ENCODE measurements at regions of chr1 and their contacts with region 1.

Region 1: GRCh38 chr1:209805875-209806760 is at the start of gene IRF6:
- DNase-seq: peak; percentile 98
- ATAC-seq: peak; percentile 93
- H3K4me3 Mint-ChIP-seq: peak within 1 kb of the TSS; percentile 98
- H3K27ac Mint-ChIP-seq: peak within 1 kb of the TSS; percentile 99
- H3K4me1 Mint-ChIP-seq: peaks cover 17% of the 10 kb centered on the region
- H3K27me3 Mint-ChIP-seq: no peaks in the 10 kb centered on the region; the same call in none of the 2 replicates
- CTCF ChIP-seq: no peak
- total RNA-seq, gene IRF6: 16.6 to 17.9 TPM (median 17.2 TPM) in 3 replicates

Region 2: DNA sequence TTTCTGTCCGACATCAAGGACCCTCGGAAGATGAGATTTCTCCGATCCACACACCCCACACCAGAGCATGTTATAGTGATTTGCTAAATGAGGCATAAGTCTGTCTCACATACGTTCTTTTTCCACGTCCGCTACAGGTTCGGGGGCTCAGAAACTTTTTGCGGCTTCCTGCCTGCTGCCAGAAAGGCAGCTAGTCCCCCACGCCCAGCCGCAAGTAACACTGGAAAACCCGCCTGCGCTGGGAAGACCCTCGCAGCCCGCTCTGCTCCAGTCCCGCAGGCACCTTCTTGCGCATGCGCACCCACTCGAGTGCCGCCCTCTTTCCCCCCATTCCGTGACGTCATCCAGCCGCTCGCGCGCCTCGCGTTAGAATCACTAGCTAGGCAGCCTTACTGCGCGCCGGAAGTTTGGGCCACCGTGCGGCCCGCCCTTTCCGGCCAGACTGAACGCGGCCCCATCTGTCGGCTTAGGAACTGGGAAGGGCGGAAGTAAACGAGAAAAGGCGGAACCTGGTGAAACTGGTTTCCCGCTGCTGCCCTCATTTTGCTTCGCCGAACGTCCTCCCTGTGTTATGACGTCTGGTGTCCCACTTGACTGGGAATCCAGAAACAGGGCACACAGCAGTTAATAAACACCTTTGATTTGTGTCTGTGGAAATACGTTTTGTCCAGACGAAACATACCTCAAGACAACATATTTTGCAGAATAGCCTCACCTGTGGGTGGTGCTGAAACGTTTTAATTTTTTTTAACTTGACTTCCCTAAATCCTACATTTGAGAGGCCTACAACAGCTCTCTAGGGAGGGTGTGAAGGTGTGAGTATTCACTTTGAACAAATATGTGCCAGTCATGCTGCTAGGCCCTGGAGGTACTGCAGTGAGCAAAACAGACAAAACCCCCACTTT is 21.6 kb before region 1 on chr1 and contains the start of gene C1orf74:
- CTCF ChIA-PET with region 1: interaction called, 6 read pairs
- POLR2A ChIA-PET with region 1: interaction called, 10 read pairs
- DNase-seq: peak; percentile 100
- ATAC-seq: peak; percentile 99
- H3K4me3 Mint-ChIP-seq: peak within 1 kb of the TSS; percentile 96
- H3K27ac Mint-ChIP-seq: peak within 1 kb of the TSS; percentile 93
- H3K4me1 Mint-ChIP-seq: peaks cover 15% of the 10 kb centered on the region; the same call in 1 of the 2 replicates
- H3K27me3 Mint-ChIP-seq: peaks cover 6% of the 10 kb centered on the region
- CTCF ChIP-seq: no peak
- total RNA-seq, gene C1orf74: 4.1 to 4.6 TPM (median 4.4 TPM) in 3 replicates

Region 3: GRCh38 chr1:209827384-209828262 is 21.5 kb after region 1 on chr1 and contains the start of gene UTP25:
- CTCF ChIA-PET with region 1: interaction called, 20 read pairs
- POLR2A ChIA-PET with region 1: interaction called, 3 read pairs
- DNase-seq: peak; percentile 92
- ATAC-seq: peak; percentile 86
- H3K4me3 Mint-ChIP-seq: peak within 1 kb of the TSS; percentile 93
- H3K27ac Mint-ChIP-seq: peak within 1 kb of the TSS; percentile 91
- H3K4me1 Mint-ChIP-seq: peaks cover 10% of the 10 kb centered on the region
- H3K27me3 Mint-ChIP-seq: peaks cover 4% of the 10 kb centered on the region; the same call in 1 of the 2 replicates
- CTCF ChIP-seq: peak; percentile 38; the same call in 1 of the 2 replicates
- total RNA-seq, gene UTP25: 4.8 to 5.5 TPM (median 5.3 TPM) in 3 replicates

Measured in WTC11 (cell line).